Prostate gland (tissue), 2 donors: ENCODE measurements at regions of chr4 and their contacts with region 1.

Region 1: DNA sequence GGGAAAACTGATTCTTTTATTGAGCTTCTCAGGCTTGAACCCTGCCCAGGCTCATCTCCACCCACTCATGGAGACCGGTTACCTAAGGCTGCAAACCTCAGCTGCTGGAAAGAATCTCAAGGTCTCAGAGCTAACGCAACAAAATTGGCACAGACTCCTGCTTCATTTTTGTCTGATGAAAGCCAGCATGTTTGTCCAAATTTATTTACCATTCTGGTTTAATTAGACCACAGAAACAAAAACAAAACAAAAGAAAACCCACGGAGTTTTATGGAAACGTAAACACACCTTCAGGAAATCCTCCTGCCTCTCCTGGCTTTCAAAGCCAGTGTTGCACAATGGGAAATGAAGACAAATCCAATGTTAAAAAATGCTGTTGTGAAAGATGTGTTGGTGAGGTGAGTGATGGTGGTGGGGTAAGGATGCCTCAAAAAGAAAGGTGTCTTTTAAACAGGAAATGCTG is 56.4 kb upstream of the PDLIM3 start:
- DNase-seq: peak; percentile 32
- H3K4me3 ChIP-seq: no peak overlapping the region
- H3K27ac ChIP-seq: peak overlapping the region; percentile 40 to 46
- H3K4me1 ChIP-seq: no peaks in the 10 kb centered on the region
- H3K27me3 ChIP-seq: no peaks in the 10 kb centered on the region
- CTCF ChIP-seq: peak in 1 of 4 experiments; percentile 27
- POLR2A ChIP-seq: no peak

Region 2: DNA sequence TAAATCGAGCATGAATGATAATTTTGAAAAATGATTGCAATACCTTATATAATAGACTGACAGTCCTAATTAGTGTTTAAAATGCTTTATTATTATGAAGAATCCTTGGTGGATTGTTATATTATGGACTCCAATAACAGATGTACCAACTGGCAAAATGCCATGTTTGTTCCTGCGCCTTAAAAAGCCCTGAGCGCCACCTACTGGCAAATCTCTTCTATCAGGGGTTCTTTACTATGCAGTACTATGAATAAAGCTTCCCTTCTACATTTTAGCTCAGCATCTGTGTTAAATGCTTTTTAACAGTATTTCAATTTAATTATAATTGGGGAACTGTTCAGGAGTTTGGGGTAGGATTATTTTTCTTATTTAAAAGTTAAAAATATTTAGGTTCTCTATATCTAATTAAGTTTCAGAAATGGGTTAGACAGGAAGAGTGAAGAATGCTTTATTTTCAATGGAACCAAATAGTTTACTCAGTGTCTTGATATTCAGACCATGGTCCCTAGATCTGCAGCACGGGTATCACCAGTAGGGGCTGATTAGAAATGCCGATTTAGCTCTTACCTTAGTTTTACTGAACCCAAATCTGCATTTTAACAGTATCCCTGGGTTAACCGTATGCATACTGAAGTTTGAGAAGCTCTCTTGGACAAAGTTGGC is 408.0 kb before region 1 on chr4:
- intact Hi-C with region 1: no loop called
- DNase-seq: peak; percentile 93
- H3K4me3 ChIP-seq: no peak overlapping the region
- H3K27ac ChIP-seq: no peak overlapping the region
- H3K4me1 ChIP-seq: no peaks in the 10 kb centered on the region
- H3K27me3 ChIP-seq: no peaks in the 10 kb centered on the region
- CTCF ChIP-seq: peak; percentile 66 to 81 (median 77)
- POLR2A ChIP-seq: no peak

Region 3: DNA sequence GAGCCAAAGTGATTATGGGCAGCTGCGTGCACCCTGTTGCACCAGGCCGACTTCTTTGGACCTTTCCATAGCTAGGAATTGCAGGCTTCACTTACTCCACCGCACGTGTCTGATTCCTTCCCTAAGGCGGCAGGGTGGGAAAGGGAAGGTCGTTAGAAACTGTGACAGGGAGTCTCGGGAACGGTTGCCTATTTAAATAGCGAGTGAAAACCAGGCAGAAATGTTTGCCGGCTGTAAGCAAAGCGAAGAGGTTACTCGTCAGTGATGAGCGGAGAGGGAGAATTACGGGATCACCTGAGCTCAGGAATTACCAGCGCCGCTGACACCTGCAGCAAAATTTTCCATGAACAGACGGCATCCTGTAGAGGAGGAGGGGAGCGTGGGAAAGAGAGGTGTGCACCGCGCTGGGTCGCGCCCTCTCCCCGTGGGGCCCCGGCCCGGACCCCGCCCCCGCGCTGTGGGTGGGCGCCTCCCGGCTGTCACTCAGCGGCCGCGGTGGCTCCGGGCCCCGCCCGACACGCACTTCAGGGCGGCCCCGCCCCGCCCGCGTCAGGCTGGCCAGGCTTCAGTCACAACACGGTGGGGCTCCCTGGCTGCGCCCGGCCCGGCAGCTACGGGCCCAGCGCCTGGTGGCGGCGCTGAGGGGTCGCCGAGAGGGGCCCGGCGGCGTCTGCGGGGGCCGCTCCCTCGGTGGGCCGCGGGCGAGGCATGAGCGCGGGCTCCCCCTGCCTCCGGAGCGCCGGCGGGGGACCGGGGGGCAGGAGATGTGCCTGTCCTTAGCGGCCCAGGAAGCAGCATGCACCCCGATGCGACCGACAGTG is 382.5 kb before region 1 on chr4 and contains the start of gene SNX25:
- intact Hi-C with region 1: loop called (anchors 5 kb)
- DNase-seq: peak; percentile 89
- H3K4me3 ChIP-seq: peak within 1 kb of the TSS; percentile 82
- H3K27ac ChIP-seq: peak within 1 kb of the TSS; percentile 85 to 95
- H3K4me1 ChIP-seq: peaks cover 7% of the 10 kb centered on the region
- H3K27me3 ChIP-seq: no peaks in the 10 kb centered on the region
- CTCF ChIP-seq: peak in 3 of 4 experiments; percentile 11 to 54 (median 52)
- POLR2A ChIP-seq: peak; percentile 96
- total RNA-seq, gene SNX25: 26.4 to 49.5 TPM

Region 4: GRCh38 chr4:185534866-185535611 is 56.7 kb before region 1 on chr4 and contains the start of gene PDLIM3:
- intact Hi-C with region 1: loop called (anchors 5 kb)
- DNase-seq: no peak
- H3K4me3 ChIP-seq: peak within 1 kb of the TSS; percentile 57 to 80
- H3K27ac ChIP-seq: peak within 1 kb of the TSS; percentile 81 to 88
- H3K4me1 ChIP-seq: no peaks in the 10 kb centered on the region
- H3K27me3 ChIP-seq: no peaks in the 10 kb centered on the region
- CTCF ChIP-seq: no peak
- POLR2A ChIP-seq: peak; percentile 51
- total RNA-seq, gene PDLIM3: 78.7 to 139 TPM